Stomach (tissue), 19 donors: ENCODE measurements at regions of chr17 and their contacts with region 1.

Region 1: GRCh38 chr17:45834471-45835396 is 9.9 kb upstream of the SPPL2C start:
- DNase-seq: no peak
- H3K4me3 ChIP-seq: no peak overlapping the region
- H3K27ac ChIP-seq: no peak overlapping the region
- H3K4me1 ChIP-seq: no peaks in the 10 kb centered on the region
- H3K27me3 ChIP-seq: peaks cover 4 to 79% (median 14%) of the 10 kb centered on the region in 3 donors
- CTCF ChIP-seq: no peak
- EP300 ChIP-seq: no peak
- POLR2A ChIP-seq: no peak

Region 2: GRCh38 chr17:45640141-45640850 is 194.4 kb before region 1 on chr17:
- intact Hi-C with region 1: loop called (anchors 5 kb)
- DNase-seq: peak; percentile 70 to 93
- H3K4me3 ChIP-seq: no peak overlapping the region
- H3K27ac ChIP-seq: no peak overlapping the region
- H3K4me1 ChIP-seq: peaks cover 0 to 7% (median 0%) of the 10 kb centered on the region in 4 donors
- H3K27me3 ChIP-seq: peaks cover 0 to 9% (median 0%) of the 10 kb centered on the region in 3 donors
- CTCF ChIP-seq: peak in 5 of 7 experiments; percentile 86 to 95 (median 91)
- EP300 ChIP-seq: no peak
- POLR2A ChIP-seq: no peak

Region 3: DNA sequence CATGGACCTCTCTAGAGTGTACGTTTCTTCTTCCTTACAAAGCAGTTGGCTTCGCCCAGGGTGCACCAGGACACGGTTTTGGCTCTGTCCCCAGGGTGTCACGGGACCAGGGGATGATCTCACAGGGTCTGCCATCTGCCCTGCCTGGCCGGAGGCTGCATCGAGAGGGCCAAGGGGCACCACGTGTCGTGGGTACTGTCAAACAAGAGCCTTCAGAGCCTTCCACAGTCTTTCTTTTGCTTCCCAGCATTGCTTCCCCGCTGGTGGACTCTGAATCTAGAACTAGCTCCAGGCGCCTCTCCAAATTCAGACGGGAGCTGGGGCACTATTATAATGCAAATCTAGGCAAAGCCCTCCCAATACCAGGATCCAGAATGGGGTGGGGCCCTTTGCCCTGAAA is 107.5 kb after region 1 on chr17:
- intact Hi-C with region 1: no loop called
- DNase-seq: peak; percentile 36 to 46
- H3K4me3 ChIP-seq: no peak overlapping the region
- H3K27ac ChIP-seq: peak overlapping the region in 2 of 5 donors; percentile 3 to 30
- H3K4me1 ChIP-seq: peaks cover 6 to 24% (median 14%) of the 10 kb centered on the region in 4 donors
- H3K27me3 ChIP-seq: peaks cover 0 to 6% (median 3%) of the 10 kb centered on the region in 3 donors
- CTCF ChIP-seq: no peak
- EP300 ChIP-seq: peak; percentile 23
- POLR2A ChIP-seq: no peak